Activated CD8-positive, alpha-beta T cell treated with anti-CD3 and anti-CD28 coated beads, Interleukin-2, amount 10 ng/mL, durations not matched to agents 7 days and 5 days (primary cell): ENCODE measurements at regions of chr2 and their contacts with region 1.

Region 1: DNA sequence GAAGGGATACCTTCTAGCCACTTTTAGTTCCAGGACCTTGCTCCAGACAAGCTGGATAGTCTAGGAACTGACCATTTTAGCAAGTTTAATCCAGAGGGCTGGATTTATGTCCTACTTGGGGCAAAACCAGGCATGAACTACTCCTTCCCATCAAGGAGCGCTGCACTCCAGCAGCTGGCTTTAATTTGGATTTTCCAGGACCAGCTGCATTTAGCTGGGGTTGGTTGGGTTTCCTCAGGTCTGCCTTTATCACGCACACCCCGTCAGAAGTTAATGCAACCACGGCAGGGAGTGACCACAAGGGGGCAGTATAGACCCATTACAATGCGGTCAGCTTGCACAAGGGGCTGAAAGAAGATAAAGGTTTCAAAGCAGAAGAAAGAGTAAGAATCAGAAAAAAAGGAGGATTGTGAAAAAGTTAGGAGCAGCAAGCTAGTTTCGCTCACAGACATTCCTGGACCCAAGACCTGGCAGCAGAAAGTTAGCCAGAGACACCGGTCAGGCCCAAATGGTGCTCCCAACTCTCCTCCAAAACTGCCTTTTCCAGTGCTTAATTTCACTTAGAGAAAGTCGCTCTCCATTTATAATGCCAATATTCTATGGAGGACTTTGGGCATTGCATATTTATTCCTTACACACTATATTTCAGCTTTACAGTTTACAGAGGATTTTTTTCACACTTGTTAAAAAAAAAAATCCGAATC is 40.1 kb downstream of the SLC4A1AP start:
- DNase-seq: peak; percentile 92
- ATAC-seq: peak; percentile 89
- H3K4me3 Mint-ChIP-seq: no peak overlapping the region
- H3K27ac Mint-ChIP-seq: no peak overlapping the region
- H3K4me1 Mint-ChIP-seq: peaks cover 15% of the 10 kb centered on the region
- H3K27me3 Mint-ChIP-seq: no peaks in the 10 kb centered on the region

Region 2: DNA sequence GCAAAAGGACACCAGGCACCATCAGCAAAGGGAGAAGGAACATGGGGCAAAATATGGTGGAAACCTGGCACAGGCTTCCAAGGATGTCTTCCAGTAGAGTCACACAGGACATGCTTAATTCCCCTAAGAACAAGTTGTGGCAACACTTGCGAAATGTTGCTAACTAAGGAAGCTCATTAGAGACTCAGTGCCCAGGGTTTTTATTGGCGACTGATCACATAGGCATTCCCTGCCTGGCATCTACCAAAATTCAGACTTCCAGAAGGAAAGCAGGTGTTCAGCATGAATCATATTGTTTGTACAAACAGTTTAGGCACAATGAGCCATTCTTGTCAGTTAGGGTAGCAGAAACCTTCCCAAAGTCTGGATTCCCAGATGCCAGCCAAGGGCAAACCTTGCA is 14.4 kb before region 1 on chr2:
- CTCF ChIA-PET with region 1: interaction called, 40 read pairs
- POLR2A ChIA-PET with region 1: no interaction called
- DNase-seq: no peak
- ATAC-seq: no peak
- H3K4me3 Mint-ChIP-seq: no peak overlapping the region
- H3K27ac Mint-ChIP-seq: no peak overlapping the region
- H3K4me1 Mint-ChIP-seq: peaks cover 17% of the 10 kb centered on the region
- H3K27me3 Mint-ChIP-seq: no peaks in the 10 kb centered on the region

Region 3: GRCh38 chr2:27715318-27716210 is 11.8 kb after region 1 on chr2:
- CTCF ChIA-PET with region 1: interaction called, 35 read pairs
- POLR2A ChIA-PET with region 1: no interaction called
- DNase-seq: peak; percentile 41
- ATAC-seq: peak; percentile 73
- H3K4me3 Mint-ChIP-seq: no peak overlapping the region
- H3K27ac Mint-ChIP-seq: no peak overlapping the region
- H3K4me1 Mint-ChIP-seq: peaks cover 33% of the 10 kb centered on the region
- H3K27me3 Mint-ChIP-seq: peaks cover 31% of the 10 kb centered on the region

Region 4: GRCh38 chr2:27723372-27724144 is 19.8 kb after region 1 on chr2:
- CTCF ChIA-PET with region 1: interaction called, 35 read pairs
- POLR2A ChIA-PET with region 1: no interaction called
- DNase-seq: peak; percentile 51
- ATAC-seq: peak; percentile 43
- H3K4me3 Mint-ChIP-seq: no peak overlapping the region
- H3K27ac Mint-ChIP-seq: no peak overlapping the region
- H3K4me1 Mint-ChIP-seq: peaks cover 37% of the 10 kb centered on the region
- H3K27me3 Mint-ChIP-seq: peaks cover 4% of the 10 kb centered on the region